ENCODE measurements at regions of chr2 and their contacts with region 1.

Region 1: GRCh38 chr2:20015472-20016083 is 3.1 kb upstream of the MATN3 start:
- DNase-seq: peak; percentile 80
- H3K4me3 ChIP-seq: no peak overlapping the region
- H3K27ac ChIP-seq: no peak overlapping the region
- H3K4me1 ChIP-seq: peaks cover 0 to 16% of the 10 kb centered on the region in 2 experiments; a peak in 2 of 4 replicates
- H3K27me3 ChIP-seq: no peaks in the 10 kb centered on the region
- CTCF ChIP-seq: peak; percentile 84
- EP300 ChIP-seq: no peak
- RAD21 ChIP-seq: peak; percentile 93

Region 2: GRCh38 chr2:19963386-19963785 is 52.2 kb before region 1 on chr2:
- CTCF ChIA-PET with region 1: interaction called, 37 read pairs
- POLR2A ChIA-PET with region 1: interaction called, 4 read pairs
- DNase-seq: no peak
- H3K4me3 ChIP-seq: no peak overlapping the region
- H3K27ac ChIP-seq: no peak overlapping the region
- H3K4me1 ChIP-seq: no peaks in the 10 kb centered on the region; a peak in 1 of 4 replicates
- H3K27me3 ChIP-seq: no peaks in the 10 kb centered on the region
- CTCF ChIP-seq: no peak
- EP300 ChIP-seq: no peak
- RAD21 ChIP-seq: no peak

Region 3: GRCh38 chr2:20027705-20028434 is 12.3 kb after region 1 on chr2:
- CTCF ChIA-PET with region 1: interaction called, 63 read pairs
- POLR2A ChIA-PET with region 1: interaction called, 3 read pairs
- DNase-seq: no peak
- H3K4me3 ChIP-seq: no peak overlapping the region
- H3K27ac ChIP-seq: peak overlapping the region in 1 of 2 experiments; percentile 20; a peak in 2 of 4 replicates
- H3K4me1 ChIP-seq: no peaks in the 10 kb centered on the region; a peak in 1 of 4 replicates
- H3K27me3 ChIP-seq: no peaks in the 10 kb centered on the region
- CTCF ChIP-seq: no peak
- EP300 ChIP-seq: no peak
- RAD21 ChIP-seq: no peak

Region 4: DNA sequence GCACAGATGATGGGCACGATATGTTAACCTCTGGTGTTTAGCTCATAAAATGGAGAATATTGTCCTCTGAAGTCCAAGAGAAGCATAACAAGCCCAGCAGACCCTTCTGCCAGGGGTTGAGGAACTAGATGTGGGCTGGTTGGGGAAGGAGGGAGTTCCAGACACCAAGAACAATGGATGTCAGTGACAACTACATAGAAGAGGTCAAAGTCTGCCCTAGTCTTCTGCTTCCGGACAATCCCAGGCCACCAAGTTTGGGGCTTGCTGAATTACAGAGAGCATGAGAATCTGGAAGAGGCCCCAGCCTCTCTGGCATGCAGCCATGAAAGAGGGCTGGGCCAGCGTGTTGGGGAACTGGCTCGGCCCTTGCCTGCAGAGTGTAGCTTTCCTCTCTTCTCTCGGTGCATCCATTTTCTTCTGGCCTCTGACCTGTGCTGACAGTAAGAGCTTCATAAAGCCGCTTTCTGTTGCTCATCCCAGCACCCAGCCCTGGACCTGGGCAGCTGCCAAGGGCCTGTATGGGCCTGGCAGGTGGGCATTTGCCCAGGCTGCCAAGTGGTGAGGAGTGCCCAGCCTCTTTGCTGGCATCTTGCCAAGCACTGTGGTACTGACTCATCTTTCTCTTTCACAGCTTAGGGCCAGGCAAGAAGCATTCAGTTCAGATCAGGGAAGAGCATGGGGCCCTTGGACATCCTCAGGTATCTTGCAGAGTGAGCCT is 50.5 kb after region 1 on chr2:
- CTCF ChIA-PET with region 1: interaction called, 21 read pairs
- POLR2A ChIA-PET with region 1: no interaction called
- DNase-seq: peak; percentile 67
- H3K4me3 ChIP-seq: no peak overlapping the region
- H3K27ac ChIP-seq: peak overlapping the region; percentile 47 to 81; a peak in 3 of 4 replicates
- H3K4me1 ChIP-seq: peaks cover 18 to 21% of the 10 kb centered on the region in 2 experiments
- H3K27me3 ChIP-seq: no peaks in the 10 kb centered on the region
- CTCF ChIP-seq: no peak
- EP300 ChIP-seq: peak; percentile 32 to 87; a peak in 2 of 4 replicates
- RAD21 ChIP-seq: peak; percentile 19; the same call in 1 of the 2 replicates

Region 5: GRCh38 chr2:20097879-20098714 is 82.5 kb after region 1 on chr2:
- CTCF ChIA-PET with region 1: interaction called, 233 read pairs
- POLR2A ChIA-PET with region 1: interaction called, 3 read pairs
- DNase-seq: peak; percentile 94
- H3K4me3 ChIP-seq: no peak overlapping the region
- H3K27ac ChIP-seq: no peak overlapping the region
- H3K4me1 ChIP-seq: peaks cover 0 to 16% of the 10 kb centered on the region in 2 experiments; a peak in 1 of 4 replicates
- H3K27me3 ChIP-seq: no peaks in the 10 kb centered on the region
- CTCF ChIP-seq: peak; percentile 99
- EP300 ChIP-seq: 0 out of 4 replicates have a peak, but pooled peaks of 1 of the 2 experiments have one; percentile 13
- RAD21 ChIP-seq: peak; percentile 100

Region 6: DNA sequence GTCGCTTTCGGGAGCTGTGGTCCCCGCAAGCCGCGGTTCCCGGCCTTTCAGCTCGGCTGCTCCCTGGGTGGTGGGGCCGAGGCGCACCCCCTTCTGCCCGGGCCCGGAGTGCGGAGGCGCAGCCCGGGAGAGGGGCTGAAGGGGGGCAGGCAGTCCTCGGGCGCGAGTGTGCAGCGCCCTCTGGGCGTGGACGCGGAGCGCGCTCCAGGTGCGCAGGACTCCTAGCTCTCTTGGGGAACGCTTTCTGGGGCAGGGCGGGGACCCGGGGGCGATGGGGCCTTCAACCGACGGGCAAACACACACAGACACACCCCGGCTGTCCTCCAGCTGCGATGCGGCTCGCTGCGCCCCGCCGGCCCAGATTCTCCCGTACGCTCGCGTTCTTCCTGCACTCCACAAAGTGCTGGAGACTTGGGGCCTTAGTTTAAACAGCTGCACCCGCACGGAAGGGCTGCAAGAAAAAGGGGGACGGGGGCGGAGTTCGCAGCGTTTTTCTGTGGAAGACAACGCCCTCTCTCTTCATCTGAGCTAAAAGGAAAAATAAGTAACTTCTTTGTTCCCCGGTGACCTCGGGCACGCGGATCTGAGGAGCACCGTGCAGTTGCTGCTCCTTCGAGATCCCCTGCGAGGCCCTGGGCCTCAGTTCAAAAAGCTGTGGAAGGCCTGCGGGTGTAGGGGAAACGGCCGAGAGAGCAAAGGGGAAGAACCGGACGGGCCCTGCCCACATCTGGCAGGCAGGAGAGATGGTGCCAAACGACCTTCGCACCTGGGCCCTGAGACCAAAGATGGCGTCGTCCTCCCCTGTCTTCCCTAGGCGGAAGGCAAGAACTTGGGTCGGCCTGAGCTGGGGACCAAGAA is 209.9 kb after region 1 on chr2:
- CTCF ChIA-PET with region 1: interaction called, 30 read pairs
- POLR2A ChIA-PET with region 1: no interaction called
- DNase-seq: no peak
- H3K4me3 ChIP-seq: peak overlapping the region; percentile 68 to 77
- H3K27ac ChIP-seq: peak overlapping the region in 1 of 2 experiments; percentile 99; a peak in 2 of 4 replicates
- H3K4me1 ChIP-seq: peaks cover 26 to 30% of the 10 kb centered on the region in 2 experiments
- H3K27me3 ChIP-seq: no peaks in the 10 kb centered on the region
- CTCF ChIP-seq: peak; percentile 72
- EP300 ChIP-seq: no peak
- RAD21 ChIP-seq: peak; percentile 81